Caco-2 (cell line): ENCODE measurements at regions of chr10 and their contacts with region 1.

Region 1: GRCh38 chr10:54800741-54801421 is at the start of gene PCDH15:
- DNase-seq: peak; percentile 60 to 63
- H3K4me3 ChIP-seq: no peak within 1 kb of the TSS
- H3K4me3 Mint-ChIP-seq: no peak within 1 kb of the TSS
- H3K27ac Mint-ChIP-seq: no peak within 1 kb of the TSS
- H3K4me1 ChIP-seq: no peaks in the 10 kb centered on the region
- H3K4me1 Mint-ChIP-seq: no peaks in the 10 kb centered on the region
- H3K27me3 ChIP-seq: no peaks in the 10 kb centered on the region
- H3K27me3 Mint-ChIP-seq: peaks cover 8% of the 10 kb centered on the region
- CTCF ChIP-seq: peak; percentile 44 to 73
- total RNA-seq, gene PCDH15: 0.02 and 0.07 TPM in 2 replicates

Region 2: GRCh38 chr10:54650547-54650946 is 150.3 kb before region 1 on chr10:
- CTCF ChIA-PET with region 1: no interaction called
- POLR2A ChIA-PET with region 1: no interaction called
- intact Hi-C with region 1: loop called (anchors 2 kb)
- DNase-seq: no peak
- H3K4me3 ChIP-seq: no peak overlapping the region
- H3K4me3 Mint-ChIP-seq: no peak overlapping the region
- H3K27ac Mint-ChIP-seq: no peak overlapping the region
- H3K4me1 ChIP-seq: no peaks in the 10 kb centered on the region
- H3K4me1 Mint-ChIP-seq: no peaks in the 10 kb centered on the region
- H3K27me3 ChIP-seq: no peaks in the 10 kb centered on the region
- H3K27me3 Mint-ChIP-seq: no peaks in the 10 kb centered on the region
- CTCF ChIP-seq: no peak

Region 3: GRCh38 chr10:54728511-54728910 is 72.4 kb before region 1 on chr10:
- CTCF ChIA-PET with region 1: no interaction called
- POLR2A ChIA-PET with region 1: no interaction called
- intact Hi-C with region 1: no loop called
- DNase-seq: no peak
- H3K4me3 ChIP-seq: no peak overlapping the region
- H3K4me3 Mint-ChIP-seq: no peak overlapping the region
- H3K27ac Mint-ChIP-seq: no peak overlapping the region
- H3K4me1 ChIP-seq: no peaks in the 10 kb centered on the region
- H3K4me1 Mint-ChIP-seq: no peaks in the 10 kb centered on the region
- H3K27me3 ChIP-seq: no peaks in the 10 kb centered on the region
- H3K27me3 Mint-ChIP-seq: no peaks in the 10 kb centered on the region
- CTCF ChIP-seq: no peak

Region 4: GRCh38 chr10:56181607-56182006 is 1380.7 kb after region 1 on chr10:
- CTCF ChIA-PET with region 1: interaction called, 11 read pairs
- POLR2A ChIA-PET with region 1: no interaction called
- intact Hi-C with region 1: no loop called
- DNase-seq: no peak
- H3K4me3 ChIP-seq: no peak overlapping the region
- H3K4me3 Mint-ChIP-seq: no peak overlapping the region
- H3K27ac Mint-ChIP-seq: no peak overlapping the region
- H3K4me1 ChIP-seq: no peaks in the 10 kb centered on the region
- H3K4me1 Mint-ChIP-seq: no peaks in the 10 kb centered on the region
- H3K27me3 ChIP-seq: no peaks in the 10 kb centered on the region; the same call in 1 of the 2 replicates
- H3K27me3 Mint-ChIP-seq: peaks cover 10% of the 10 kb centered on the region
- CTCF ChIP-seq: no peak